Esophagus muscularis mucosa (tissue), 4 donors: ENCODE measurements at regions of chr20 and their contacts with region 1.

Region 1: GRCh38 chr20:6142348-6142993 is 19.6 kb upstream of the FERMT1 start:
- DNase-seq: peak; percentile 87
- H3K4me3 ChIP-seq: no peak overlapping the region
- H3K27ac ChIP-seq: no peak overlapping the region
- H3K4me1 ChIP-seq: no peaks in the 10 kb centered on the region
- H3K27me3 ChIP-seq: peaks cover 0 to 20% (median 0%) of the 10 kb centered on the region in 4 donors
- CTCF ChIP-seq: peak; percentile 65 to 81 (median 80)
- EP300 ChIP-seq: no peak
- POLR2A ChIP-seq: no peak

Region 2: GRCh38 chr20:5881714-5882113 is 260.8 kb before region 1 on chr20:
- intact Hi-C with region 1: no loop called
- DNase-seq: no peak
- H3K4me3 ChIP-seq: no peak overlapping the region
- H3K27ac ChIP-seq: no peak overlapping the region
- H3K4me1 ChIP-seq: no peaks in the 10 kb centered on the region
- H3K27me3 ChIP-seq: peaks cover 0 to 7% (median 0%) of the 10 kb centered on the region in 4 donors
- CTCF ChIP-seq: no peak
- EP300 ChIP-seq: no peak
- POLR2A ChIP-seq: no peak

Region 3: DNA sequence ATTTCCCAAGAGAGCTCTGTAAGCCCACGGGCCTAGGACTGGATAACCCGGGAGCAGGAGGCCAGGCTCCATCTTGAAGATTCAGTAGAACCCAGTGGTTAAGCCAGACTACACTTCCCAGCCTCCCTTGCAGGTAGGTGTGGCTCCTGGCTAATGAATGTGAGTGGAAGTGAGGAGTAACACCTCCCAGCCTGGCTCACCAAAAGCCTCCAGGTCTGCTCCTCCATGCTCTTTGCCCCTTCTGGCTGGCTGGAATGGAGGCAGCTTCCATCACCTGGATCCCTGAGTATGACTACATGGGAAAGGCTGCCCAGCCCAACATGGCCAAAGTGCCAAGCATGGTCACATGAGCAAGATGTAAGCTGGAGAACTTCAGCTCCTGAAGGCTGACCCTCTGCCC is 98.4 kb before region 1 on chr20:
- intact Hi-C with region 1: no loop called
- DNase-seq: no peak
- H3K4me3 ChIP-seq: no peak overlapping the region
- H3K27ac ChIP-seq: no peak overlapping the region
- H3K4me1 ChIP-seq: no peaks in the 10 kb centered on the region
- H3K27me3 ChIP-seq: no peaks in the 10 kb centered on the region
- CTCF ChIP-seq: no peak
- EP300 ChIP-seq: no peak
- POLR2A ChIP-seq: no peak

Region 4: DNA sequence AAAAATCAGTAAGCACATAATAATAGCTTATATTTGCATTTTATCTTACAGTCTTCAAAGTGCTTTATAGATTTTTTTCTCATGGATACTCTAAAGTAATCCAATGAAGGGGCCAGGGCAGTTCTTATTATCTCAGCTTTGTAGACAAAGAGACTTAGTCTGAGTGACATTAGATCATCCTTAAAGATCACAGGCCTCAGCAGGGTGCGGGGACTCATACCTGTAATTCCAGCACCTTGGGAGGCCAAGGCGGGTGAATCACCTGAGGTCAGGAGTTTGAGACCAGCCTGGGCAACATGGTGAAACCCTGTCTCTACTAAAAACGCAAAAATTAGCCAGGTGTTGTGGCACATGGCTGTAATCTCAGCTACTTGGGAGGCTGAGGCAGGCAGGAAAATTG is 34.1 kb before region 1 on chr20:
- intact Hi-C with region 1: no loop called
- DNase-seq: no peak
- H3K4me3 ChIP-seq: no peak overlapping the region
- H3K27ac ChIP-seq: no peak overlapping the region
- H3K4me1 ChIP-seq: no peaks in the 10 kb centered on the region
- H3K27me3 ChIP-seq: no peaks in the 10 kb centered on the region
- CTCF ChIP-seq: no peak
- EP300 ChIP-seq: no peak
- POLR2A ChIP-seq: no peak

Region 5: DNA sequence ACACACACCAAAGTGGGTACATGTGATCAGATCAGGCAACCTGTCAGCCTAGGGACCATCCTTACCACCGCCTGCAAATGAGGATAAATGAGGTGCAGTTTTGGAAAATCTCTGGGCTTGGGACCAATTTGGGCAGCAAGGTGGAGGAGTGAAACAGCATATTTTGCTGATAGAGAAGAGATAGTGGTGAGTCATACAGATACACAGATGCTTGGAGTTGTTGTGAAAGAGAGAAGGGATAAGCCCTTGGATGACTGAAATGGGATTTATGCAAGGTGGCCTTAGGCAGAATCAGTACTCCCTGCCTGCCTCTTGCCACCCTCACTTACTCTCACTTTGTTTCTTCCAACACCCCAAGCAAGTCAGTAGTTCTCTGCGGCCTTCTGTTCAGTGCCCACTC is 659.8 kb after region 1 on chr20:
- intact Hi-C with region 1: no loop called
- DNase-seq: no peak
- H3K4me3 ChIP-seq: no peak overlapping the region
- H3K27ac ChIP-seq: no peak overlapping the region
- H3K4me1 ChIP-seq: no peaks in the 10 kb centered on the region
- H3K27me3 ChIP-seq: no peaks in the 10 kb centered on the region
- CTCF ChIP-seq: no peak
- EP300 ChIP-seq: no peak
- POLR2A ChIP-seq: no peak

Region 6: DNA sequence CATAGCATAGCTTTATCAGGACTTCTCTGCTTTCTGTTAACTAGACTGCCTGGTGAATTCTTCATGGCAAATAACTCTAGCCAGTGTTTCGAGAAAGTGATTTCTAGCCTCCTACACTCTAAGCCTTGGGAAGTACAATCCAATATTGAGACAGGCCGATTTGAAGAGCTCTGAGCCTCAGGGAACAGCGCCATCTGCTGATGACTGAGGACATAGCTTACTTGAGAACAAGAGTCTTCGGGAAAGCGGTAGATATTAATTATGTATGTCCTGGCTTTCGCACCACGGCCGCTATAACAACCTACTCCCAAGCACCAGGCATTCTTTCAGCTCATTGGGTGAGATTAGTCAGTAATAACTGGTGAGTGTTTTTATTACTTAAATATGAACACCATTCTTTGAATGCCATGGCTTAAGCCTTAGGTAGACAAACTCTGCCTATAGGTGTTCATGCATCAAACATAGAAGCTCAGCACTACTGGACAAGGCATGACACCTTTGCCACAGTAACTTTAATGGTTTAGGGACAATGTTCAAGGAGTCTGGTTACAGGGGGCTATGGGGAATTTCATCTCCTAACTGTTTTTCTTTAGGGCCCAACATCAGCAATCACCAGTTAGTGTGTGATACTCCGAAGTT is 1143.6 kb after region 1 on chr20:
- intact Hi-C with region 1: loop called (anchors 10 kb)
- DNase-seq: no peak
- H3K4me3 ChIP-seq: no peak overlapping the region
- H3K27ac ChIP-seq: no peak overlapping the region
- H3K4me1 ChIP-seq: peaks cover 0 to 7% (median 0%) of the 10 kb centered on the region in 4 donors
- H3K27me3 ChIP-seq: no peaks in the 10 kb centered on the region
- CTCF ChIP-seq: peak; percentile 53 to 80 (median 76)
- EP300 ChIP-seq: no peak
- POLR2A ChIP-seq: no peak